ENCODE measurements at regions of chr10 and their contacts with region 1.

Region 1: GRCh38 chr10:118568327-118568848 is 27.1 kb downstream of the PRLHR start:
- DNase-seq: peak; percentile 11 to 80 (median 71)
- ATAC-seq: peak; percentile 80
- H3K4me3 ChIP-seq: no peak overlapping the region
- H3K4me3 Mint-ChIP-seq: peak overlapping the region in 6 of 10 donors; percentile 32 to 69 (median 58)
- H3K27ac ChIP-seq: no peak overlapping the region
- H3K27ac Mint-ChIP-seq: peak overlapping the region in 3 of 9 donors; percentile 17 to 47 (median 36)
- H3K4me1 ChIP-seq: no peaks in the 10 kb centered on the region
- H3K4me1 Mint-ChIP-seq: peaks cover 2 to 19% (median 11%) of the 10 kb centered on the region in 7 donors
- H3K27me3 ChIP-seq: no peaks in the 10 kb centered on the region
- H3K27me3 Mint-ChIP-seq: peaks cover 0 to 10% (median 0%) of the 10 kb centered on the region in 5 donors

Region 2: DNA sequence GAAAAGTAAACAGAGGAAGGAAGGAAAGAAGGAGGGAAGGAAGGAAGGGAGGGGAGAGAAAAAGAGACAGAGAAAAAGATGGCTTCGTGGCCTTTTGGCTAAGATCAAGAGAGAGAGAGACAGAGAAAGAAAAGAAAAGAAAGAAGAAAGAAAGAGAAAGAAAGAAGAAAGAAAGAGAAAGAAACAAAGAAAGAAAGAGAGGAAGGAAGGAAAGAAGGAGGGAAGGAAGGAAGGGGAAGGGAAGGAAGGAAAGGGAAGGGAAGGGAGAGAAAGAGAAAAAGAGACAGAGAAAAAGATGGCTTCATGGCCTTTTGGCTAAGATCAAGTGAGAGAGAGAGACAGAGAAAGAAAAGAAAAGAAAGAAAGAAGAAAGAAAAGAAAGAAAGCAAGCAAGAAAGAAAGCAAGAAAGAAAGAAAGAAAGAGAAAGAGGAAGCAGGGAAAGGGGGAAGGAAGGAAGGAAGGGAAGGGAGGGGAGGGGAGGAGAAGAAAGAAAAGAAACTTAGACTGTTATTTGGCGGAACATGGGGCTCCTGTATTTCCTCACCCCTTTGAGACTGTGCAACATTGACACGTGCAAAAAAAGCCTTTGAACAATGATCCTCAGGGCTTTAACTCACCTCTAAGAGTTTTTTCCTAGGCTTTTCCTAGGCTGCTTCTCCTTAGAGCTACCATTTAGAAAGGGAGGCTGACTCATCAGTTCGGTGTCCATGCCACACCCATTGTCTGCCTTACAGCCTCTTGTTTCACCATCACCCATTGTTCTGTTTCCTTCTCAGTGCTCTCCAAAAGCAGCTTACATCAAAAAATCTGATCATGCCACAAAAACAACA is 64.1 kb before region 1 on chr10:
- CTCF ChIA-PET with region 1: no interaction called
- POLR2A ChIA-PET with region 1: no interaction called
- intact Hi-C with region 1: no loop called
- DNase-seq: no peak
- ATAC-seq: no peak
- H3K4me3 ChIP-seq: no peak overlapping the region
- H3K4me3 Mint-ChIP-seq: no peak overlapping the region
- H3K27ac ChIP-seq: no peak overlapping the region
- H3K27ac Mint-ChIP-seq: no peak overlapping the region
- H3K4me1 ChIP-seq: no peaks in the 10 kb centered on the region
- H3K4me1 Mint-ChIP-seq: peaks cover 0 to 7% (median 4%) of the 10 kb centered on the region in 7 donors
- H3K27me3 ChIP-seq: no peaks in the 10 kb centered on the region
- H3K27me3 Mint-ChIP-seq: peaks cover 0 to 13% (median 6%) of the 10 kb centered on the region in 5 donors

Region 3: DNA sequence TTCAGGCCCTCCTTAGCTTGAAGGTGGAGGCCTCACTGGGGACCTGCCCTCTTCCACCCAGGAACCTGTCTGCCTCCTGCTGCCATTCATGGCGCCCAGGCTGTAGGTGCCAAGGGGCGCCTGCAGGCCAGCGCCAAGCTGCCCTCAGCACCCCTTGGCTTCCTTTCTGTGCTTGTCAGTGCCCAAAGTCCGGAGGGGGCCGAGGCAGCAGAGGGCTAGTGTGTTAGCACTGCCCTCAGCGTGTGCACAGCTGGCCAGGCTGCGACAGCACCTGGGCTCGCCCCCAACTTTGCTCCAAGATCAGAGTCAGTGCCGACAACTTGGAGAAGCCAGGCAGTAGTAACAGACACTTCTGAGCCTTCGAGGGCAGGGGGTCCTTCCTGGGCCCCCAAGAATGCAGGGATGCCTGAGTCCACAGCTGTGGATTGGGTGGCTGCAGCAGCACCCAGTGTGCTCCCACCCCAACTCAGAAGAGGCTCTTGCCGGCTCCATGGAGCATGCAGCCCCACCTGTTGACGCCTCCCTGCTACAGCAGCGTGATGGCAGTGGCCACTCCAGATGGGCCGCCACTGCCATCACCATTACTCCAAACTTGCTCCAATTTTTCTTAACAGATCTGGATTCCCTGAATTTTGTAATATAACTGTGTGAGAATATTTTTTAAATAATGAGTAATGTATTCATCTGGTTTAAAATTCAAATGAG is 144.7 kb after region 1 on chr10:
- CTCF ChIA-PET with region 1: interaction called, 105 read pairs
- POLR2A ChIA-PET with region 1: no interaction called
- intact Hi-C with region 1: no loop called
- DNase-seq: no peak
- ATAC-seq: no peak
- H3K4me3 ChIP-seq: no peak overlapping the region
- H3K4me3 Mint-ChIP-seq: no peak overlapping the region
- H3K27ac ChIP-seq: no peak overlapping the region
- H3K27ac Mint-ChIP-seq: no peak overlapping the region
- H3K4me1 ChIP-seq: peaks cover 0 to 5% of the 10 kb centered on the region in 2 donors
- H3K4me1 Mint-ChIP-seq: peaks cover 10 to 30% (median 20%) of the 10 kb centered on the region in 7 donors
- H3K27me3 ChIP-seq: no peaks in the 10 kb centered on the region
- H3K27me3 Mint-ChIP-seq: no peaks in the 10 kb centered on the region

Region 4: GRCh38 chr10:118720685-118721538 is 152.5 kb after region 1 on chr10:
- CTCF ChIA-PET with region 1: interaction called, 105 read pairs
- POLR2A ChIA-PET with region 1: interaction called, 3 read pairs
- intact Hi-C with region 1: loop called (anchors 1 kb)
- DNase-seq: peak; percentile 15 to 75 (median 64)
- ATAC-seq: peak; percentile 78
- H3K4me3 ChIP-seq: no peak overlapping the region
- H3K4me3 Mint-ChIP-seq: no peak overlapping the region
- H3K27ac ChIP-seq: no peak overlapping the region
- H3K27ac Mint-ChIP-seq: peak overlapping the region in 1 of 9 donors; percentile 21
- H3K4me1 ChIP-seq: peaks cover 0 to 8% of the 10 kb centered on the region in 2 donors
- H3K4me1 Mint-ChIP-seq: peaks cover 6 to 36% (median 24%) of the 10 kb centered on the region in 7 donors
- H3K27me3 ChIP-seq: no peaks in the 10 kb centered on the region
- H3K27me3 Mint-ChIP-seq: no peaks in the 10 kb centered on the region

Region 5: DNA sequence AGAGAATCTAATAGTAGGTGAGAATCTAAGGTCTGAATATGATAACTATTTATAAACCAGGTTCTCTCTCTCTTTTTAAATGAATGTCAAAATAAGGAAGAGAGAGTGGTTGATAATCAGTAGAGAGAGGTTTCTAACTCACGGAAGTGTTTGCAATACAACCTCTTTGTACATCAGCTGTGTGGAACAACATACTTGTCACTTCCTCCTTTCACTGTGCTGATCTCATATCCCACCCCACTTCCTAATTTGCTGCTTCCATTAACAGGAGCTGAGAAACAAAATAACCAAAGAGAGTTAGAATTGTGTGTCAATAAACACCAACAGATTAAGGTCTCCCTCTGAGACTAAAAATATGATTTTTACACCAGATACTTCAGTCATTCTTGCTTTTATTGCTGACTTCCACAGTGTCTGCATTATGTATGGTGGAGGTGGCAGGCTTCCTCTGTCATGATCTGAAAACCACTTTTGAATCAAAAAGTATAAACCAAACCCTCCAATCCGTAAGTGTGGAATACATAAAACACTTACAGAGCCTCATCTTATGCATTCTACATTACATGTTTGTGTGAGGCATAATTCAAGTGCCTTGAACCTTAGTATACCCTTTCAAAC is 161.4 kb after region 1 on chr10:
- CTCF ChIA-PET with region 1: interaction called, 14 read pairs
- POLR2A ChIA-PET with region 1: no interaction called
- intact Hi-C with region 1: no loop called
- DNase-seq: peak in 7 of 9 donors; percentile 22 to 54 (median 51)
- ATAC-seq: peak; percentile 85
- H3K4me3 ChIP-seq: no peak overlapping the region
- H3K4me3 Mint-ChIP-seq: peak overlapping the region in 9 of 10 donors; percentile 26 to 79 (median 65)
- H3K27ac ChIP-seq: peak overlapping the region; percentile 14
- H3K27ac Mint-ChIP-seq: peak overlapping the region; percentile 29 to 95 (median 78)
- H3K4me1 ChIP-seq: peaks cover 39 to 58% of the 10 kb centered on the region in 2 donors
- H3K4me1 Mint-ChIP-seq: peaks cover 47 to 80% (median 69%) of the 10 kb centered on the region in 7 donors
- H3K27me3 ChIP-seq: no peaks in the 10 kb centered on the region
- H3K27me3 Mint-ChIP-seq: no peaks in the 10 kb centered on the region

Region 6: DNA sequence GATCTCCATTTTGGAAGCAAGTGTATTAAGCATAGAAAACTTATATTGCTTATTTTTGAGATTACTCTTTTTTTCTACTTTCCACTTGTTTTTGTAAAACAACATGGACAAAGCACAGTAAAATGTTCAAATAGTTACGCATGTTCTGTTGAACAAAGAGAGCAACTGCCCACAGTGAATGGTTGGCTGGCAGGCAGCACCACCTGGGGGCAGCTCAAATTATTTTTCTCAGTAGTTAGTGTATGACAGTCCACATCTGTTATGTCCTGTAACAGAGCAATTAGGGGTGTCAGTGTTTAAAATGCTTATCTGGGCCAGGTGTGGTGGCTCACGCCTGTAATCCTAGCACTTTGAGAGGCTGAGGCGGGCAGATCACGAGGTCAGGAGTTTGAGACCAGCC is 232.5 kb after region 1 on chr10:
- CTCF ChIA-PET with region 1: interaction called, 3 read pairs
- POLR2A ChIA-PET with region 1: no interaction called
- intact Hi-C with region 1: loop called in 1 of 2 experiments (anchors 1 kb)
- DNase-seq: peak in 3 of 9 donors; percentile 9 to 16 (median 11)
- ATAC-seq: peak; percentile 59
- H3K4me3 ChIP-seq: no peak overlapping the region
- H3K4me3 Mint-ChIP-seq: no peak overlapping the region
- H3K27ac ChIP-seq: no peak overlapping the region
- H3K27ac Mint-ChIP-seq: no peak overlapping the region
- H3K4me1 ChIP-seq: no peaks in the 10 kb centered on the region
- H3K4me1 Mint-ChIP-seq: no peaks in the 10 kb centered on the region
- H3K27me3 ChIP-seq: no peaks in the 10 kb centered on the region
- H3K27me3 Mint-ChIP-seq: peaks cover 4 to 31% (median 12%) of the 10 kb centered on the region in 5 donors

Region 7: DNA sequence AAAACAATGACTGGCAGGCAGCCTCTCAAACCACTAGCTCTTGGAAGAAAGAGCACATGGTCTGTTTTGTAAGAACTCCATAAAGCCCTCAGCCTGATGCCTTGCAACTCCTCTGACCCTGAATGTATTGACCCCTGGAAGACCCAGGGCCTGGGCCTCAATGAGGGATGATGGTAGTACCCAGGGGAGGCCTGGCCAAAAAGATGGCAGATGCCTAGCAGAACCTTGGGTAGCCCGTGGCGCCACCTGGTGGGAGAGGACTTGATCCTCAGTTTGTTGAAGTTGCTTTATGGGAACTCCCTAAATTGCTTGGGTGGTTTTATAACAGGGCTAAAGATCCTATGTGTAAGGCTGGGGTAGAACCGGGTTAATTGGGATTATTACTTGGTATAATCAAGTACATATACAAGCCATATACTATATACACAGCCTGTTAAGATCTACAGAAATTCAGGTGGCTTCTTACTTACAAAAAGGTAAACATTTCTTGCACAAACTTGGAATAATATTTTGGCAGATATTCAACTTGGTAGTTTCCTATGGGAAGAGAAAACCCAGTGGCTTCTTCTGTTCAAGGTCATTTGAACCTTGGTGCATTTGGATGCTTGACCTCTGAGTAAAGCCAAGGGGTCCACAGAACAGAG is 282.2 kb after region 1 on chr10:
- CTCF ChIA-PET with region 1: interaction called, 10 read pairs
- POLR2A ChIA-PET with region 1: no interaction called
- intact Hi-C with region 1: loop called in 1 of 2 experiments (anchors 1 kb)
- DNase-seq: peak in 8 of 9 donors; percentile 27 to 72 (median 37)
- ATAC-seq: peak; percentile 62
- H3K4me3 ChIP-seq: no peak overlapping the region
- H3K4me3 Mint-ChIP-seq: no peak overlapping the region
- H3K27ac ChIP-seq: no peak overlapping the region
- H3K27ac Mint-ChIP-seq: no peak overlapping the region
- H3K4me1 ChIP-seq: no peaks in the 10 kb centered on the region
- H3K4me1 Mint-ChIP-seq: peaks cover 0 to 3% (median 0%) of the 10 kb centered on the region in 7 donors
- H3K27me3 ChIP-seq: no peaks in the 10 kb centered on the region
- H3K27me3 Mint-ChIP-seq: peaks cover 0 to 9% (median 6%) of the 10 kb centered on the region in 5 donors

Region 8: DNA sequence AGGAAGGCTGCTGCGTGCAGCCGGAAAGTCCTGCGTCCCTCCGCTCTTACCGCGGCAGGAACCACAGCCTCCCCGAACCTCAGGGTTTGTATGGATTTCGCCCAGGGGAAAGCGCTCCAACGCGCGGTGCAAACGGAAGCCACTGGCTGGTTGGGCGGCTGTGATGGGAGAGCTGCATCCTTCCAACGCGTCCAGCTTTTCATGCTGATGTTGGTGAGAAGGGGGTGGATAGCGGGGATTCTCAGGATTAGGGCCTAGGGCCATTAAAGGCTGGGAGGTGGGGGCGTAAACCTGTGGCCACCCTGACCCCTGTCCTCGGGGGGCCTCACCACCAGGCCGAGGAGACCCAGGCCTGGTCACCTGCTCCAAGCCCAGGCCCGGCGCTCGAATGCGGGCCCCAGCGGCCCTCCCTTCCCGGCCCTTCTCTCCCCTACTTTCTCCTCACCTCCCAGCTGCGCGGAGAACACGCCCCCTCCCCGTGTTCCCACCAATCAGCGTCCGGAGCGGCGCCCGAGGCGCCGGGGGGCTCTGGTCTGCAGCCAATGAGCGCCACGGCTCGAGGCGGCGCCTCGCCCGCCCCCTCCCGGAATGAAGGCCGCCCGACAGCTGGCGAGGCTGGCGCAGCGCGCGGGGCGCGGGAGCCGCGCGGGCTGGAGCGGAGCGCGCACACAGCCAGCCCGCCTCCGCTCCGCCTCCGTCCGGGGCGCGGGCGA is 460.7 kb after region 1 on chr10:
- CTCF ChIA-PET with region 1: interaction called, 4 read pairs
- POLR2A ChIA-PET with region 1: no interaction called
- intact Hi-C with region 1: loop called (anchors 2 to 5 kb)
- DNase-seq: peak; percentile 50 to 81 (median 60)
- ATAC-seq: peak; percentile 85
- H3K4me3 ChIP-seq: peak overlapping the region; percentile 43
- H3K4me3 Mint-ChIP-seq: peak overlapping the region; percentile 59 to 87 (median 78)
- H3K27ac ChIP-seq: no peak overlapping the region
- H3K27ac Mint-ChIP-seq: peak overlapping the region in 3 of 9 donors; percentile 17 to 65 (median 55)
- H3K4me1 ChIP-seq: no peaks in the 10 kb centered on the region
- H3K4me1 Mint-ChIP-seq: peaks cover 6 to 24% (median 10%) of the 10 kb centered on the region in 7 donors
- H3K27me3 ChIP-seq: no peaks in the 10 kb centered on the region
- H3K27me3 Mint-ChIP-seq: peaks cover 0 to 12% (median 0%) of the 10 kb centered on the region in 5 donors

Measured in naive thymus-derived CD4-positive, alpha-beta T cell (primary cell).